HCT116 (cell line): ENCODE measurements at regions of chr6 and their contacts with region 1.

Region 1: GRCh38 chr6:45086360-45087084 is 241.6 kb upstream of the RUNX2 start:
- DNase-seq: no peak
- ATAC-seq: no peak
- H3K4me3 ChIP-seq: no peak overlapping the region
- H3K27ac ChIP-seq: no peak overlapping the region
- H3K4me1 ChIP-seq: no peaks in the 10 kb centered on the region
- H3K27me3 ChIP-seq: no peaks in the 10 kb centered on the region
- CTCF ChIP-seq: no peak
- POLR2A ChIP-seq: no peak
- RAD21 ChIP-seq: peak; percentile 42

Region 2: GRCh38 chr6:44735630-44735963 is 350.9 kb before region 1 on chr6:
- CTCF ChIA-PET with region 1: no interaction called
- POLR2A ChIA-PET with region 1: no interaction called
- RAD21 ChIA-PET with region 1: no interaction called
- intact Hi-C with region 1: no loop called
- DNase-seq: no peak
- ATAC-seq: no peak
- H3K4me3 ChIP-seq: no peak overlapping the region
- H3K27ac ChIP-seq: no peak overlapping the region
- H3K4me1 ChIP-seq: no peaks in the 10 kb centered on the region
- H3K27me3 ChIP-seq: no peaks in the 10 kb centered on the region
- CTCF ChIP-seq: no peak
- POLR2A ChIP-seq: no peak
- RAD21 ChIP-seq: no peak

Region 3: GRCh38 chr6:45421709-45422502 is 335.4 kb after region 1 on chr6:
- CTCF ChIA-PET with region 1: no interaction called
- POLR2A ChIA-PET with region 1: no interaction called
- RAD21 ChIA-PET with region 1: no interaction called
- intact Hi-C with region 1: loop called (anchors 5 kb)
- DNase-seq: no peak
- ATAC-seq: peak; percentile 64
- H3K4me3 ChIP-seq: peak overlapping the region; percentile 53 to 73
- H3K27ac ChIP-seq: peak overlapping the region; percentile 33; the same call in 1 of the 2 replicates
- H3K4me1 ChIP-seq: peaks cover 8 to 36% of the 10 kb centered on the region in 2 experiments
- H3K27me3 ChIP-seq: peaks cover 18% of the 10 kb centered on the region
- CTCF ChIP-seq: peak in 2 of 3 experiments; percentile 14 to 15; a peak in 2 of 6 replicates
- POLR2A ChIP-seq: no peak
- RAD21 ChIP-seq: peak; percentile 41

Region 4: DNA sequence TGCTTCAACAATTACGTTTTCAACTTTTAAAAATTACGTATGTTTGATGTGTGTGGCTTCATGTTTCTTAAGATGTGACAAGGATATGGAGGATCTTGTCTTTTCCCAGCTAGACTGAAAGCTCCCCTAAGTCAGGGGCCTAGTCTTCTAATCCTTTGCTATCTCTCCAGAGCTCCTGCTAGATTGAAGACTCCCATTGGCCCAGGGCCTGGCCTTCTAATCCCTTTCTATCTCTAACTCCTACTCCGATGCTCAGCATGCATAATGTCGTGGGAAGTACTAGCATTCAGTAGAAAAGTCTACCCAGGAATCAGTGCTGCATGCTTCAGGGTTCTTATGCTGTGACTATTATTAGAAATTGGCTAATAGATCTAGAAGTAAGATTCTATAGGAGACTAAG is 436.0 kb after region 1 on chr6:
- CTCF ChIA-PET with region 1: no interaction called
- POLR2A ChIA-PET with region 1: no interaction called
- RAD21 ChIA-PET with region 1: no interaction called
- intact Hi-C with region 1: no loop called
- DNase-seq: no peak
- ATAC-seq: no peak
- H3K4me3 ChIP-seq: no peak overlapping the region
- H3K27ac ChIP-seq: no peak overlapping the region
- H3K4me1 ChIP-seq: peaks cover 27 to 33% of the 10 kb centered on the region in 2 experiments
- H3K27me3 ChIP-seq: no peaks in the 10 kb centered on the region; the same call in 1 of the 2 replicates
- CTCF ChIP-seq: no peak
- POLR2A ChIP-seq: no peak
- RAD21 ChIP-seq: no peak

Region 5: GRCh38 chr6:45741437-45742171 is 655.1 kb after region 1 on chr6:
- CTCF ChIA-PET with region 1: no interaction called
- POLR2A ChIA-PET with region 1: no interaction called
- RAD21 ChIA-PET with region 1: no interaction called
- intact Hi-C with region 1: no loop called
- DNase-seq: no peak
- ATAC-seq: no peak
- H3K4me3 ChIP-seq: no peak overlapping the region
- H3K27ac ChIP-seq: no peak overlapping the region
- H3K4me1 ChIP-seq: no peaks in the 10 kb centered on the region
- H3K27me3 ChIP-seq: no peaks in the 10 kb centered on the region
- CTCF ChIP-seq: no peak
- POLR2A ChIP-seq: no peak
- RAD21 ChIP-seq: no peak